CD8-positive, alpha-beta T cell (primary cell): ENCODE measurements at regions of chr11 and their contacts with region 1.

Region 1: GRCh38 chr11:12331239-12331874 is 46.0 kb upstream of the PARVA start:
- DNase-seq: peak; percentile 22 to 81 (median 73)
- ATAC-seq: no peak
- H3K4me3 ChIP-seq: no peak overlapping the region
- H3K4me3 Mint-ChIP-seq: no peak overlapping the region
- H3K27ac ChIP-seq: no peak overlapping the region
- H3K27ac Mint-ChIP-seq: no peak overlapping the region
- H3K4me1 ChIP-seq: no peaks in the 10 kb centered on the region
- H3K4me1 Mint-ChIP-seq: peaks cover 5% of the 10 kb centered on the region
- H3K27me3 ChIP-seq: no peaks in the 10 kb centered on the region
- H3K27me3 Mint-ChIP-seq: no peaks in the 10 kb centered on the region
- CTCF ChIP-seq: peak; percentile 80

Region 2: DNA sequence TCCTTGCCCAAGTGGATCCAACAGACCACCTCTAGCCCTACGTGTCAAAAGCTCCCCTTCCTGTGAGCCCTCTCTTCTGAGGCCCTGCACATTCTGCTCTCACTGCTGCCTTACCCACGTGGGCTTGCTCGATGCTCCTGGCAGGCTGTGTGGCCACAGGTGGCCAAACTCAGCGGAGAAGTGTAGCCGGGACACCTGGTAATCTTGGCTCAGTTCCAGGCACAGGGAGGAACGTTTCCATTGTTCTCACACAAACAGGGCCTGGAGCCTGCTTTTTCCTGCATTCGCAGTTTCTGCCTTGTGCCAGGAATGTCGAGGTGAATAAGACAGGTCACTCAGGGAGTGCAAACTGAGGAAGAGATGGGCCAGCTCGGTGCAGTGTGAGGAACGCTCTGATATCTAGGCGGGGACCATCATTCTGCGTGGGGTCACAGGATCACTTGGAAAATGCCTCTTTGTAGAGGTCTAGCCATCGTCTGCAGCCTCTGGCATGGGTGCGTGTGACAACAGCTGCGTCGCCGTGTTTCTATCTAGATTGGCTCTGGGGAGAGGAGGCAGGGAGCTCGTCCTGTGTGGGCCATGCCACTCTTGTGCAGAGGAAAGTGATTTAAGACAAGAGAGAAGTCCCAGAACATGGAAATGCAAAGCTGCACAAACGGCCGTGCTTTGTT is 81.6 kb before region 1 on chr11:
- CTCF ChIA-PET with region 1: no interaction called
- POLR2A ChIA-PET with region 1: no interaction called
- intact Hi-C with region 1: no loop called
- DNase-seq: no peak
- ATAC-seq: no peak
- H3K4me3 ChIP-seq: no peak overlapping the region
- H3K4me3 Mint-ChIP-seq: no peak overlapping the region
- H3K27ac ChIP-seq: no peak overlapping the region
- H3K27ac Mint-ChIP-seq: no peak overlapping the region
- H3K4me1 ChIP-seq: no peaks in the 10 kb centered on the region
- H3K4me1 Mint-ChIP-seq: no peaks in the 10 kb centered on the region
- H3K27me3 ChIP-seq: no peaks in the 10 kb centered on the region
- H3K27me3 Mint-ChIP-seq: no peaks in the 10 kb centered on the region
- CTCF ChIP-seq: no peak

Region 3: GRCh38 chr11:12318791-12319438 is 12.4 kb before region 1 on chr11:
- CTCF ChIA-PET with region 1: interaction called, 41 read pairs
- POLR2A ChIA-PET with region 1: no interaction called
- intact Hi-C with region 1: no loop called
- DNase-seq: no peak
- ATAC-seq: no peak
- H3K4me3 ChIP-seq: no peak overlapping the region
- H3K4me3 Mint-ChIP-seq: no peak overlapping the region
- H3K27ac ChIP-seq: no peak overlapping the region
- H3K27ac Mint-ChIP-seq: no peak overlapping the region
- H3K4me1 ChIP-seq: peaks cover 6% of the 10 kb centered on the region
- H3K4me1 Mint-ChIP-seq: peaks cover 19% of the 10 kb centered on the region
- H3K27me3 ChIP-seq: no peaks in the 10 kb centered on the region
- H3K27me3 Mint-ChIP-seq: peaks cover 6% of the 10 kb centered on the region
- CTCF ChIP-seq: no peak

Region 4: DNA sequence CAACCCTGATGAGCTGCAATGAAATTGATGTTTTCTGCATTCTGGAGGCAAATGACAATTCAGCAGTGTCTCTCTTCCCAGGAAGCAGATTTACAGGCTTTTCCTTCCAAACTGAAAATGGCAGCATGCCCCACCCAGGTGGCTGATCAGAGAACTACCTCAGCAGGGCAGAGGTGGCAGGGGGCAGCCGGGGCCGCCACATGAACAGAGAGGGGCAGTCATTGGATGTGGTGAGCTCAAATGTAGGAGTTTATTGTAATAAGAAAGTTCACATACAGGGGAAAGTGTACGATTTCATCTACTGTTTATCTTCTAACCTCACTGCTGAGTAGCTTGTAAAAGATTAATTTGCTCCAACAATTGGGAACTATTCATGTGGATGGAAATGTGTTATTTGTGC is 30.3 kb after region 1 on chr11:
- CTCF ChIA-PET with region 1: interaction called, 12 read pairs
- POLR2A ChIA-PET with region 1: no interaction called
- intact Hi-C with region 1: no loop called
- DNase-seq: no peak
- ATAC-seq: no peak
- H3K4me3 ChIP-seq: no peak overlapping the region
- H3K4me3 Mint-ChIP-seq: no peak overlapping the region
- H3K27ac ChIP-seq: no peak overlapping the region
- H3K27ac Mint-ChIP-seq: peak overlapping the region; percentile 68
- H3K4me1 ChIP-seq: peaks cover 48% of the 10 kb centered on the region
- H3K4me1 Mint-ChIP-seq: peaks cover 73% of the 10 kb centered on the region
- H3K27me3 ChIP-seq: no peaks in the 10 kb centered on the region
- H3K27me3 Mint-ChIP-seq: no peaks in the 10 kb centered on the region
- CTCF ChIP-seq: no peak

Region 5: DNA sequence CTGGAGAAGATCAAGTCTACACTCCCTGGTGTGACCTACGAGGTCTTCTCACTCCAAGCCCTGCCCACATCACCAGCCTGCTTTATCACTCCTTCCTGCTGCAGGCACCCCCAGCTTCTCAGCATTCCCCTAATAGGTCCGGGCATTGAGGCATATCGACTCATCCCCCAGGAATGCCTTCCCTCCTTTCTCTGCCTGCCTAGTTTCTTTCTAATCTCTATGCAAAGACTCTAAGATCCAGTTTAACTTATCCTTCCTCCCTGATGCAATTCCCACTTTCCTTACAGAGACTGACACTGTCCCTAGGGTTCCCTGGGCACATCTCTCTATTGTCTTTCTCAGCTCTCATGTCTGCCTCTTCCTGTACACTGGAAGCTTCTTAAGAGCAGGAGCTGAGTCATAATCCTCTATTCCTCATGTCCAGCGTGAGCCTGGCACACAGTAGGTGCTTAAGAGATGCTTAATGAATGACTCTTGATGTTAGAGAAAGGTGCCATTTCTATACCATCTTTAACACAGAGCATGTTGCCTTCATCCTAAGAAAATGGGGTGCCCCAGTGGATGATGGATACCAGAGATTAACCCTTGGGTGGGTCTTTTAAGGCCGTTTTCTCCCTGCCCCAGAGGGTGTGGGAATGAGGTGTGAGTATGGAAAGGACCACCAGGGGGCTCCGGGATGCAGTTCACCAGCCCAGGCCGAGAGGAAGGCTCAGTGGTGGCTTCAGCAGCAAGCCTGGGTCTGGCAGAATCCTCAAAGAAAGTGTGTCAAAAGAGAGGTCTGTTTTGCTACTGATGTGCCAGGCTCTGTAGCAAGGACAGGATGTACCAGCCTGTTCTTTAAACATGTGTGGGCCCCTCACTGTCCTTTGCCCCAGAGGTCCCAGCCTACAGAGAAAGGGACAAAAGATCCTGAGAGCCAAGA is 80.7 kb after region 1 on chr11:
- CTCF ChIA-PET with region 1: interaction called, 14 read pairs
- POLR2A ChIA-PET with region 1: no interaction called
- intact Hi-C with region 1: loop called in 1 of 2 experiments (anchors 2 kb)
- DNase-seq: peak in 5 of 9 experiments; percentile 13 to 39 (median 21)
- ATAC-seq: no peak
- H3K4me3 ChIP-seq: no peak overlapping the region
- H3K4me3 Mint-ChIP-seq: no peak overlapping the region
- H3K27ac ChIP-seq: no peak overlapping the region
- H3K27ac Mint-ChIP-seq: no peak overlapping the region
- H3K4me1 ChIP-seq: no peaks in the 10 kb centered on the region
- H3K4me1 Mint-ChIP-seq: no peaks in the 10 kb centered on the region
- H3K27me3 ChIP-seq: no peaks in the 10 kb centered on the region
- H3K27me3 Mint-ChIP-seq: peaks cover 6% of the 10 kb centered on the region
- CTCF ChIP-seq: peak; percentile 32

Region 6: GRCh38 chr11:12888525-12889158 is 557.3 kb after region 1 on chr11:
- CTCF ChIA-PET with region 1: interaction called, 139 read pairs
- POLR2A ChIA-PET with region 1: interaction called, 3 read pairs
- intact Hi-C with region 1: loop called (anchors 1 kb)
- DNase-seq: peak; percentile 14 to 70 (median 63)
- ATAC-seq: no peak
- H3K4me3 ChIP-seq: no peak overlapping the region
- H3K4me3 Mint-ChIP-seq: no peak overlapping the region
- H3K27ac ChIP-seq: no peak overlapping the region
- H3K27ac Mint-ChIP-seq: no peak overlapping the region
- H3K4me1 ChIP-seq: no peaks in the 10 kb centered on the region
- H3K4me1 Mint-ChIP-seq: no peaks in the 10 kb centered on the region
- H3K27me3 ChIP-seq: no peaks in the 10 kb centered on the region
- H3K27me3 Mint-ChIP-seq: peaks cover 16% of the 10 kb centered on the region
- CTCF ChIP-seq: peak; percentile 68

Region 7: DNA sequence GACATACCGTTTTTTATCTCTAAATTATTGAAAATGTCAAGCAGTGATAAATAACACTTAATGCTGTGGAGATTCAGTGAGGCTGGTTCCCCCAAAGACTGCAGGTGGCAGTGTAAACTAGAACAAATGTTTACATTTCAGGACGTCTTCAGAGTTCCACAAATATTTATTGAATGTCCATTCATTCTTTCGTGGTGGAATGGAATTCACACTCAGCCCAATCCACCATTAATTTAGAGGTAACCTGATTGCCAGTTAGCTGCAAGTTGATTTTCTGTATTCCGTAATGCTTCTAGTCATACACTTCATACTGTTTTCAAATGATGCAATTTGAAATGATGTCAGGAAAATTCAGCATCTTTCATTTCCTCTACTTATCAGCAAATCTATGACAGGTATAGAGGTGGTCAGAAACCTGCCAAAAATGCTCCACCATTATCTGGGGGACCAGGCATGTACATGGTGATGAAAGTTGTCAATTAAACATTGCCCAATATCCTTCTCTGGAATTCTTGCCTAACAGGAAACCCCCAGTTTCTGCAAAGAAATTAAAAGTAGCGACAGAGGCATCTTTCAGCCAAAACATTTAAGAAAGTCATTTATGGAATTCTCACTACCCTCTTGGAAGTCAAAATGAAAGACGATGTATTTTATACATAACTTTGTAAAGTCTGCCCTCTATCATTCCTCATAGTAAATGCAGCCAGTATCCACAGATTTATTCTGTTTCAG is 851.9 kb after region 1 on chr11:
- CTCF ChIA-PET with region 1: no interaction called
- POLR2A ChIA-PET with region 1: no interaction called
- intact Hi-C with region 1: loop called in 1 of 2 experiments (anchors 2 kb)
- DNase-seq: peak in 2 of 9 experiments; percentile 39 to 49
- ATAC-seq: no peak
- H3K4me3 ChIP-seq: no peak overlapping the region
- H3K4me3 Mint-ChIP-seq: no peak overlapping the region
- H3K27ac ChIP-seq: no peak overlapping the region
- H3K27ac Mint-ChIP-seq: no peak overlapping the region
- H3K4me1 ChIP-seq: peaks cover 4% of the 10 kb centered on the region
- H3K4me1 Mint-ChIP-seq: peaks cover 6% of the 10 kb centered on the region
- H3K27me3 ChIP-seq: peaks cover 0 to 3% of the 10 kb centered on the region in 2 experiments
- H3K27me3 Mint-ChIP-seq: peaks cover 19% of the 10 kb centered on the region
- CTCF ChIP-seq: peak; percentile 36

Region 8: DNA sequence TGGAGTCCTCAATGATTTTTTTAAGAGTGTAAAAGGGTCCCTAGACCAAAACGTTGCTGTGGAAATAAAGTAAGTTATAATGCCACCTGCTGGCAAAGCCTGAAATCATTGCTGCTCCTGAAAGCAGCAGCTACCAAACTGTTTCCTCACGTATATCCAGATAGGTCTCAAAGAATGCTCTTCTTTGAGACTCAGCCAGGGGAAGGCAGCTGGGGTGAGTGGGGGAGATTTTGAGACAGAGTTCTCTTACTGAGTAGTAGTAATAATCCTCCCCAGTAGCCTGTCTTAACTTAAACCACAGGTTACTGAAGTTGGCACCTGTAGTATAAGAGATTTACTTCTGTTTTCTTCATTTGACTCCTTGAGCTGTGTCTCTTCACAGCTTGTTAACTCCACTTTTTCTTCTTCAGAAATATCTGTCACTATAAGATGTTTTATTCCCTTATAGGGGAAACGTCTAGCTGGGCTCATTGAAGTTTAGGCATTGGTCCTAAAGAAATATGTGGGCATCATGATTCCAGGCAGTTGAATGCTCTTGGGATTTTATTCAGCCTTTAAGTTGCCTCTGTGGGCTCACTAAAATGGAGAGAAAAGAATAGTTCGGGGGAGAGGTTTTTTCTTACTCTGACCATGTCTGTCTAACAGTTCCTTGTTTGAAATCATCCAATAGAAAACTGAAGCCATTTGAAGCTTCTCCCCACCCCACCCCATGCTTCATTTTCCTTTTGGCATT is 1053.7 kb after region 1 on chr11:
- CTCF ChIA-PET with region 1: no interaction called
- POLR2A ChIA-PET with region 1: no interaction called
- intact Hi-C with region 1: loop called in 1 of 2 experiments (anchors 5 kb)
- DNase-seq: peak in 4 of 9 experiments; percentile 17 to 50 (median 28)
- ATAC-seq: peak; percentile 29
- H3K4me3 ChIP-seq: no peak overlapping the region
- H3K4me3 Mint-ChIP-seq: no peak overlapping the region
- H3K27ac ChIP-seq: no peak overlapping the region
- H3K27ac Mint-ChIP-seq: no peak overlapping the region
- H3K4me1 ChIP-seq: no peaks in the 10 kb centered on the region
- H3K4me1 Mint-ChIP-seq: peaks cover 3% of the 10 kb centered on the region
- H3K27me3 ChIP-seq: no peaks in the 10 kb centered on the region
- H3K27me3 Mint-ChIP-seq: no peaks in the 10 kb centered on the region
- CTCF ChIP-seq: peak; percentile 59